ENCODE measurements at regions of chr3 and their contacts with region 1.

Region 1: DNA sequence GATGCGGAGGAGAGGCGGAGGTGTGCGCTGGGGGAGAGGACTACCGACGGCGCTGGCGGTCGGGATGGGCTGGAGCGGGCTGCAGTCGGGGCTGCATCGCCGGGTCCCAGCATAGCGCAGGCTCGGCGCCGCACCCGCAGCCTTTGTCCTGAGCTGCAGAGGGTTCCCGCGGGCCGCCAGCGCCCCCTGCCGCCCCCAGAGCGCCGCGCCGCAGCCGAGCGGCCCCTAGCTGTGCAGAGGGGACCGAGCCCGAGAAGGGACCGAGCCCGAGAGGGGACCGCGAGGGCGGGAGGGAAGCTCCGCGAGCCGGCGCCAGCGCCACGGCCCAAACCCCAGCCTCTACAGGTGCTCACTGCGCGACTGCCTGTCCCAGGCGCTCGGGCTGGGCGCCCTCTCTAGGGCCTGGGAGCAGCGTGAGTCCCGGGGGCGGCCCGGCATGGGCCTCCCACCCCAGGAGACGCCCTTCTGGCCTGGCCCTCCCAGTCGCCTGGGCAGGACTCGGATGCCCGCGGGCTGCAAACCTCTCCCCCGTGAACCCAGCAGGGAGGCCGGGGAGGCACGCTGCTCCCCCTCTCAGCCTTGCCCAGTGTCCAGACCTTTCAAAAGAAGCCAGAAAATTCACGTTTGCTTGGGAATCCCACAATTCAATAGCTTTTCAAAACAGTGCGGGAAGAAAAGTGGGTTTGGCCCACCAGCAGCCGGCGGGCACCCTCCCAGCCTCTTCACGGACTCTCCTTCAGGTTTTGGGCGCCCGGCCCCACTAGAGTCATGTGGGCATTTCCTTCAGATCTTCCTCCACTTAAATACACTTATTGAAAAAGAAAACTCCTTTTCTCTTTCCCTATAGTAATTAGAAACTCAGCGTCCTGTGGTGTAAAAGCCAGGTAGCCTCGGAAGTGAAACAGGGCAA is 134.7 kb downstream of the TPRA1 start:
- DNase-seq: peak; percentile 43 to 90 (median 78)

Region 2: GRCh38 chr3:126679318-126679751 is 776.5 kb before region 1 on chr3:
- intact Hi-C with region 1: loop called (anchors 5 kb)
- DNase-seq: peak; percentile 38 to 94 (median 88)

Region 3: GRCh38 chr3:128194843-128195242 is 739.0 kb after region 1 on chr3:
- intact Hi-C with region 1: no loop called
- DNase-seq: peak in 21 of 42 donors; percentile 12 to 71 (median 31)